K562 (cell line): ENCODE measurements at regions of chr1 and their contacts with region 1.

Region 1: GRCh38 chr1:46708121-46708520 is 10.8 kb downstream of the EFCAB14 start:
- DNase-seq: no peak
- ATAC-seq: no peak
- H3K4me3 ChIP-seq: no peak overlapping the region
- H3K27ac ChIP-seq: no peak overlapping the region
- H3K4me1 ChIP-seq: no peaks in the 10 kb centered on the region
- H3K27me3 ChIP-seq: no peaks in the 10 kb centered on the region
- CTCF ChIP-seq: no peak
- EP300 ChIP-seq: no peak
- POLR2A ChIP-seq: no peak
- RAD21 ChIP-seq: no peak

Region 2: GRCh38 chr1:46718727-46719622 is 10.9 kb after region 1 on chr1 and contains the start of gene EFCAB14:
- CTCF ChIA-PET with region 1: no interaction called
- POLR2A ChIA-PET with region 1: interaction called, 20 read pairs
- in situ Hi-C with region 1: no loop called
- intact Hi-C with region 1: no loop called
- DNase-seq: peak; percentile 99 to 100 (median 100)
- ATAC-seq: peak; percentile 98
- H3K4me3 ChIP-seq: peak within 1 kb of the TSS; percentile 95
- H3K27ac ChIP-seq: peak within 1 kb of the TSS; percentile 89
- H3K4me1 ChIP-seq: peaks cover 29 to 38% of the 10 kb centered on the region in 2 experiments
- H3K27me3 ChIP-seq: no peaks in the 10 kb centered on the region
- CTCF ChIP-seq: no peak
- EP300 ChIP-seq: no peak; the same call in 1 of the 2 replicates
- POLR2A ChIP-seq: peak; percentile 89
- RAD21 ChIP-seq: no peak
- polyA plus RNA-seq, gene EFCAB14: 7.3 to 9.4 TPM

Region 3: DNA sequence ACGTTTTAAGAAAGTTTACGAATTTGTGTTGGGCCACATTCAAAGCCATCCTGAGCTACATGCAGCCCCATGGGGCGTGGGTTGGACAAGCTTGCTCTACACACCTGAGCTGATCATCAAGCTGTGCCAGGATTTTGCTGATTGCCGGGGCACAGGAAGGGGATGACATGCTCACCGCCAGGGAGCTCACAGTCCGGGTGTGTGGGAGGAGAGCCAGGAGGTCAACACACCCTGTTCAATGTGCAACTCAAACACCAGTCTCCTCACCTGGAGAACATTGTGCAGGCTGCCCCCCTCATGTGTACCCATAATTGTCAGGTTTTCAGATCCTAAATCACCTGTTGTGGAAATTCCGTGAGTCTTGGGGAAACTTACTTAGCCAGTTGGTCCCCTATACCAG is 232.2 kb after region 1 on chr1:
- CTCF ChIA-PET with region 1: no interaction called
- POLR2A ChIA-PET with region 1: no interaction called
- in situ Hi-C with region 1: no loop called
- intact Hi-C with region 1: no loop called
- DNase-seq: no peak
- ATAC-seq: no peak
- H3K4me3 ChIP-seq: no peak overlapping the region
- H3K27ac ChIP-seq: no peak overlapping the region
- H3K4me1 ChIP-seq: no peaks in the 10 kb centered on the region
- H3K27me3 ChIP-seq: no peaks in the 10 kb centered on the region
- CTCF ChIP-seq: no peak
- EP300 ChIP-seq: no peak
- POLR2A ChIP-seq: no peak
- RAD21 ChIP-seq: no peak